B cell (primary cell): ENCODE measurements at regions of chrX and their contacts with region 1.

Region 1: GRCh38 chrX:43958529-43958928 is 14.7 kb downstream of the NDP start:
- DNase-seq: peak; percentile 58
- ATAC-seq: peak; percentile 41
- H3K4me3 ChIP-seq: no peak overlapping the region
- H3K4me3 Mint-ChIP-seq: no peak overlapping the region
- H3K27ac ChIP-seq: no peak overlapping the region
- H3K27ac Mint-ChIP-seq: no peak overlapping the region
- H3K4me1 ChIP-seq: no peaks in the 10 kb centered on the region
- H3K4me1 Mint-ChIP-seq: no peaks in the 10 kb centered on the region
- H3K27me3 ChIP-seq: no peaks in the 10 kb centered on the region
- H3K27me3 Mint-ChIP-seq: peaks cover 18% of the 10 kb centered on the region
- CTCF ChIP-seq: peak; percentile 64

Region 2: GRCh38 chrX:44130189-44130588 is 171.7 kb after region 1 on chrX:
- CTCF ChIA-PET with region 1: no interaction called
- POLR2A ChIA-PET with region 1: no interaction called
- intact Hi-C with region 1: no loop called
- DNase-seq: no peak
- ATAC-seq: no peak
- H3K4me3 ChIP-seq: no peak overlapping the region
- H3K4me3 Mint-ChIP-seq: no peak overlapping the region
- H3K27ac ChIP-seq: no peak overlapping the region
- H3K27ac Mint-ChIP-seq: no peak overlapping the region
- H3K4me1 ChIP-seq: no peaks in the 10 kb centered on the region
- H3K4me1 Mint-ChIP-seq: no peaks in the 10 kb centered on the region
- H3K27me3 ChIP-seq: peaks cover 0 to 19% (median 0%) of the 10 kb centered on the region in 4 experiments
- H3K27me3 Mint-ChIP-seq: peaks cover 8% of the 10 kb centered on the region
- CTCF ChIP-seq: no peak

Region 3: GRCh38 chrX:44542567-44543325 is 584.2 kb after region 1 on chrX and contains the start of gene FUNDC1:
- CTCF ChIA-PET with region 1: interaction called, 4 read pairs
- POLR2A ChIA-PET with region 1: no interaction called
- intact Hi-C with region 1: loop called (anchors 5 kb)
- DNase-seq: peak; percentile 90
- ATAC-seq: peak; percentile 94
- H3K4me3 ChIP-seq: peak within 1 kb of the TSS; percentile 48 to 94 (median 85)
- H3K4me3 Mint-ChIP-seq: peak within 1 kb of the TSS; percentile 97
- H3K27ac ChIP-seq: peak within 1 kb of the TSS; percentile 72 to 85
- H3K27ac Mint-ChIP-seq: peak within 1 kb of the TSS; percentile 97
- H3K4me1 ChIP-seq: peaks cover 11 to 13% of the 10 kb centered on the region in 2 donors
- H3K4me1 Mint-ChIP-seq: peaks cover 18% of the 10 kb centered on the region
- H3K27me3 ChIP-seq: no peaks in the 10 kb centered on the region
- H3K27me3 Mint-ChIP-seq: no peaks in the 10 kb centered on the region
- CTCF ChIP-seq: peak; percentile 36
- total RNA-seq, gene FUNDC1: 5.7 and 6.4 TPM in 2 replicates